ENCODE measurements at regions of chr1 and their contacts with region 1.

Region 1: DNA sequence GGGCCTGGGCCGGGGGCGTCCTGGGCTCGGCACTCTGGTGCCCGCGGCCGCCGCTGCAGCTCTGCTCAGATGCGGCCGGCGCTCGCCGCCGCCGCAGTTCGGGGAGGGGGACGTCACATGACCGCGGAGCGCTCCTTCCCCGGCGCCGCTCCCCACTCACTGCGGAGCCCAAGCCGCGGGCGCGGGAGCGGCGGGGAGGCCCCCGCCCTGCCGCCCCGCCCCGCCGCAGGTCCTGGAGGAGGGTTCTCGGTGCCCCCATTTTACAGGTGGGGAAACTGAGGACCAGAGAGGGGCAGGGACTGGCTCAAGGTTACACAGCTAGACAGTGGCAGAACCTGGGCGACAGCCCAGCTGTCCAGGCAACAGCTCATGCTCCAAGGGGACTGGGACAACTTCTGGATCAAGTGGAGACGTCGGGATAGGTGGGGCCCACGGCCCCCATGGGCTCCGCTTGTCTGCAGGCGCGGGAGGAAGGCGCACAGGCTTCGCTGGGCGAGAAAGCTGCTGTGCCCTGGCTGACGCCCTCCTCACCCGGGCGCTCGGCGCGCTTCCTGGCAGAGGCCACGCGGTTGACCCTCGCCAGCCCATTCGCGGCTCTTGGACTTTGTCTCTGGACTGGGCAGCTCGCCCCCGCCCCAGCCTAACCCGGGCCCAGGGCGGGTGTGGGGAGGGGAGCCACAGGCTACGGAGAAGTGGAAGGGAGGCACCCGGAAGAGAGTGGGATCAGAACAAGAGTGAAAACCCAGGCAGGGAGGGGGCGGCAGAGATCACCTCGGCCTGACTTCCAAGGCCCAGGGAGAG is at the start of gene RAP1GAP:
- DNase-seq: no peak
- H3K4me3 ChIP-seq: peak within 1 kb of the TSS in 2 of 3 donors; percentile 51 to 65
- H3K27ac ChIP-seq: no peak within 1 kb of the TSS
- H3K4me1 ChIP-seq: peaks cover 4 to 29% of the 10 kb centered on the region in 2 donors
- H3K27me3 ChIP-seq: peaks cover 5 to 17% of the 10 kb centered on the region in 2 donors
- CTCF ChIP-seq: no peak
- POLR2A ChIP-seq: no peak
- total RNA-seq, gene RAP1GAP: 0.32 to 7.2 (median 6.0) TPM

Region 2: DNA sequence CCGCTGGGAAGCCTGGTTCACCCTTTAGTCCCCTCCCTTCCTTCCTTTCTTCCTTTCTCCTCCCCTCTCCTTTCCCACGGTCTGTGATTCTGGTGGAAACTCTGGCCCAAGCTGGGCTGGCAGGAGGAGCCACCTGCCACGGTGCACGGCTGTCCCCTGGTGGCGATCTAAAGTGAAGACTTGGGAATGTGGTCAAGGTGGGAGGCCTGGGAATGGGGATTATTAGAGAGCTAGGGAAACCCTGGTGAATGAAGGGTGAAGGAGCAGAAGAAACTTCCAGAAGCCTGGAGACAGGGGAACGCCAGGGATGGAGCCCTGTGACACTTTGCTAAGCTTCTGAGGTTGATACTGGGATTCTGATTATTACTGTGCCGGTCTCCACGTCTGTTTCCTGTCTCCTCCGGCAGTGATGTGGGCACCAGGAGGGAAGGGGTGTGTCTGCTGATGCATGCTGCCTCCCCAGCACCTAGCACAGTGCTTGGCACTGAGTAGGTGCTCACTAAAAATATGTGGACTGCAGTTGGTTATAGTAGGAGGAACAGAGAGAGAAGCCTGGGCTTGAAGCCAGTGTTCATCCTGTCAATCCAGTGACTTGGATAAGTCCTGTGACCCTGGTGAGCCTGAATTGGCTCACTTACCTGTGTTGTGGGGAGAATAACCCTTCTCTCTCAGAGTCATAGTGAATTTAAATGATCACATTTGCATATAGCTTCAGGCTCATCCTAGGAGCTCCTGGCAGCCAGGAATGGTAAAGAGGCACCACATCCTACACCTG is 300.8 kb before region 1 on chr1:
- intact Hi-C with region 1: loop called (anchors 2 kb)
- DNase-seq: peak; percentile 64 to 79
- H3K4me3 ChIP-seq: no peak overlapping the region
- H3K27ac ChIP-seq: no peak overlapping the region
- H3K4me1 ChIP-seq: no peaks in the 10 kb centered on the region
- H3K27me3 ChIP-seq: no peaks in the 10 kb centered on the region
- CTCF ChIP-seq: peak; percentile 96 to 100 (median 100)
- POLR2A ChIP-seq: no peak

Measured in breast epithelium (tissue), 4 donors.